ENCODE measurements at regions of chr20 and their contacts with region 1.

Region 1: GRCh38 chr20:44521484-44522481 is at the start of gene SERINC3:
- DNase-seq: peak; percentile 98
- ATAC-seq: peak; percentile 99
- H3K4me3 Mint-ChIP-seq: peak within 1 kb of the TSS; percentile 81
- H3K27ac Mint-ChIP-seq: peak within 1 kb of the TSS; percentile 93
- H3K4me1 Mint-ChIP-seq: peaks cover 55% of the 10 kb centered on the region
- H3K27me3 Mint-ChIP-seq: no peaks in the 10 kb centered on the region
- total RNA-seq, gene SERINC3: 51.9 to 58.5 TPM

Region 2: GRCh38 chr20:44355498-44356352 is 166.1 kb before region 1 on chr20 and contains the start of gene HNF4A:
- CTCF ChIA-PET with region 1: no interaction called
- POLR2A ChIA-PET with region 1: no interaction called
- intact Hi-C with region 1: no loop called
- DNase-seq: no peak
- ATAC-seq: no peak
- H3K4me3 Mint-ChIP-seq: no peak within 1 kb of the TSS
- H3K27ac Mint-ChIP-seq: no peak within 1 kb of the TSS
- H3K4me1 Mint-ChIP-seq: no peaks in the 10 kb centered on the region
- H3K27me3 Mint-ChIP-seq: peaks cover 4% of the 10 kb centered on the region
- total RNA-seq, gene HNF4A: not detected

Region 3: GRCh38 chr20:44475694-44476560 is 45.9 kb before region 1 on chr20 and contains the start of gene TTPAL:
- CTCF ChIA-PET with region 1: interaction called, 4 read pairs
- POLR2A ChIA-PET with region 1: no interaction called
- intact Hi-C with region 1: loop called (anchors 1 kb)
- DNase-seq: peak; percentile 96
- ATAC-seq: peak; percentile 97
- H3K4me3 Mint-ChIP-seq: peak within 1 kb of the TSS; percentile 91
- H3K27ac Mint-ChIP-seq: peak within 1 kb of the TSS; percentile 97
- H3K4me1 Mint-ChIP-seq: peaks cover 22% of the 10 kb centered on the region
- H3K27me3 Mint-ChIP-seq: no peaks in the 10 kb centered on the region
- total RNA-seq, gene TTPAL: 18.3 to 21.5 TPM

Region 4: DNA sequence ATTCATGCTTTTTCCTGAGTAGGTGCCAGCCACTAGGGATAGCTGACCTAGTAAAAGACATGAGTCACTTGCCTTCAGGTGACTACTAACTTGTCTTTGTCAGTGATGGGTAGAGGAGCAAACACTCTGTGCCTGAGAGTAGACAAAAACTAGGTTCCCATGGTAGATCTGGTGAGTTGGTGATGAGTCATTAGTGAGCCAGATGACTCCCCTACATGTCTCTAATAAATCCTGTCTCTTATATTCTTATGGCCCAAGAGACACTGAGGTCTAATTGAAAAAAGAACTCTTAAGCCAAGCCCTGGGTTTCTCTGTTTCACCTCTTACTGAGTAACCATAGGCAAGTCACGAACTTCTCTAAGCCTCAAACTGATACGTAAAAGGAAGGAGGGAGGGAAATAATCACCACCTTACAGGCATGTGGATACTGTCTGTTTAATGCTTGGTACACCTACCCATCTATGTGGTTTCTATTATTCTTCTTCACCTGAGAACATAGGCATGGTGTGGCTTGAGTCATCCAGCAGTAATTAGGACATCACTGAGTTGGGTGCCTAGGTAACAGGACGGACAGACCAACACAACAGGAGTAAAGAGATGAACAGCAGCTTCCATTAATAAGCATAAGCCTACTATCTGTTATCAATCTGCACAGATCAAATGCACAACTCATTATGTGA is 25.8 kb before region 1 on chr20:
- CTCF ChIA-PET with region 1: interaction called, 5 read pairs
- POLR2A ChIA-PET with region 1: no interaction called
- intact Hi-C with region 1: loop called (anchors 1 kb)
- DNase-seq: peak; percentile 27
- ATAC-seq: peak; percentile 84
- H3K4me3 Mint-ChIP-seq: no peak overlapping the region
- H3K27ac Mint-ChIP-seq: peak overlapping the region; percentile 78
- H3K4me1 Mint-ChIP-seq: peaks cover 50% of the 10 kb centered on the region
- H3K27me3 Mint-ChIP-seq: no peaks in the 10 kb centered on the region

Region 5: GRCh38 chr20:44501448-44501847 is 20.3 kb before region 1 on chr20:
- CTCF ChIA-PET with region 1: interaction called, 12 read pairs
- POLR2A ChIA-PET with region 1: no interaction called
- intact Hi-C with region 1: loop called in 1 of 2 experiments (anchors 1 kb)
- DNase-seq: no peak
- ATAC-seq: no peak
- H3K4me3 Mint-ChIP-seq: no peak overlapping the region
- H3K27ac Mint-ChIP-seq: peak overlapping the region; percentile 49
- H3K4me1 Mint-ChIP-seq: peaks cover 19% of the 10 kb centered on the region
- H3K27me3 Mint-ChIP-seq: no peaks in the 10 kb centered on the region

Region 6: DNA sequence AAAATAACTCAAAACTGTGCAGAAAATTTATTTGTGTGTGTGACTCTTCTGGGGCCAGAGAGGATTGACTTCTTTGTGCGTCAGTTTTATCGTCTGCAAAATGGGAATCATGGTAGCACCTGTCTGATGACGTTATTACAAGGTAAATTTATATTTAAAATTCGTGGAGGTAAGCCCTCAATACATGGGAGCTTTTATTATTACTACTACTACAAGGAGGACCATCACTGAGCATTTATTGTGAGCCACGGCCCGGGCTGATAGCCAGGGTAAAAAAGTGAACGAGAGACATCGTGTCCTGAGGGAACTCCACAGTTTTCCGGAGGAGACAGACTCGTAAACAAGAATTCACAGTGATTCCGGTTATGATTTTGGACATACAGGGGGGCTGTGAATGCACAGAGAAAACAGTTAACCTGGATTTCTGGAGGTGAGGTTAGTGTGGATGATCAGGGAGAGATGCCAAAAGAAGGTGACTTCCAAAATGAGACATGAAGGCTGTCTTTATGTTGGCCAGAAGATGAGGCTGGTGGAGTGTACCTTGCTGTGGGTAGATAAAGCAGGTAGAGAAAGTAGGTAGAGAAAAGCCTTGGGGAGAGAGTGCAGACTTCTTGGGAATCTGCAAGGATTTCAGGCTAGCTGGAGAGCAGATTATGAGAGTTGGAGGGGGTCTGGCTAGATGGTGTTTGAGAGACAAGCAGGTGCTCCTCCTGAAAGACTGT is 10.6 kb after region 1 on chr20:
- CTCF ChIA-PET with region 1: no interaction called
- POLR2A ChIA-PET with region 1: no interaction called
- intact Hi-C with region 1: loop called in 1 of 2 experiments (anchors 1 kb)
- DNase-seq: no peak
- ATAC-seq: peak; percentile 31
- H3K4me3 Mint-ChIP-seq: no peak overlapping the region
- H3K27ac Mint-ChIP-seq: no peak overlapping the region
- H3K4me1 Mint-ChIP-seq: peaks cover 4% of the 10 kb centered on the region
- H3K27me3 Mint-ChIP-seq: no peaks in the 10 kb centered on the region

Region 7: DNA sequence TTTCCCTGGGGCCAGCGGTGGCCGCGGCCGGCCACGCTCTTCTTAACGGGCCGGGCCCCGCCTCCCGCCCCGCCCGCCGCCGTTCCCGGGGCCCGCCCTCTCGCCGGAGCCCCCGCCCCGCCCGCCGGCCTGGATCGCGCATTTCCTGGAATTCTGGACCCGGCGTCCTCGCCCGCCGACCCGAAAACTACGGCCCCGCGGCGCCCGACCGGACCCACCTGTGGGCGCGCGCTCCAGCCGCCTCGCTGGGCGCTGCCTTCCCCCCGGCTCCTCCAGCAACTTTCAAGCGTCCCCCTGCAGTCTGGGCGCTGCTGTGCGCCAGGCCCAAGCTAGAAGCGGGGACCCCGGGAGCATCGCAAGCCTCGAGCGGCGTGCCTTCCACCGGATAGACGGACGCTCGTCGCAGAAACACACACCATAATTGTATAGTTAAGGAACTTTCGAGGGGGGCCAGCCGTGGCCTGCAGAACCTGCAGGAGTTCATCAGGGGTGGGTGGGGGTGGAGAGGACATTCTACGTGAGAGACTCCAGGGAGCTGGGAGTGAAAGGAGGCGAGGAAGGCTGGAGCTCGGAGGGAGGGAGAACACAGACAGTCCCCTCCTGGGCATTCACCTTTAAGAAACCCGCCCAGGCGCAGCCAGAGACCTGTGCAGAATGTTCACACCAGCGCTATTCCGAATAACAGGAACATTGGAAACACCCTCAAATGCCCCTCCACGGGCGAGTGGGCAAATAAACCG is 130.1 kb after region 1 on chr20 and contains the start of gene ADA:
- CTCF ChIA-PET with region 1: no interaction called
- POLR2A ChIA-PET with region 1: no interaction called
- intact Hi-C with region 1: loop called in 1 of 2 experiments (anchors 1 kb)
- DNase-seq: peak; percentile 65
- ATAC-seq: peak; percentile 48
- H3K4me3 Mint-ChIP-seq: peak within 1 kb of the TSS; percentile 78
- H3K27ac Mint-ChIP-seq: peak within 1 kb of the TSS; percentile 89
- H3K4me1 Mint-ChIP-seq: peaks cover 50% of the 10 kb centered on the region
- H3K27me3 Mint-ChIP-seq: no peaks in the 10 kb centered on the region
- total RNA-seq, gene ADA: 33.8 to 37.8 TPM

Measured in activated CD4-positive, alpha-beta T cell treated with anti-CD3 and anti-CD28 coated beads for 36 hours (primary cell).